Activated CD4-positive, alpha-beta T cell treated with anti-CD3 and anti-CD28 coated beads, Interleukin-2, amount 10 ng/mL, durations not matched to agents 24 days and 14 days (primary cell): ENCODE measurements at regions of chr17 and their contacts with region 1.

Region 1: GRCh38 chr17:29709861-29710519 is 87.3 kb upstream of the CORO6 start:
- DNase-seq: no peak
- H3K4me3 Mint-ChIP-seq: no peak overlapping the region
- H3K27ac Mint-ChIP-seq: no peak overlapping the region
- H3K4me1 Mint-ChIP-seq: peaks cover 35% of the 10 kb centered on the region
- H3K27me3 Mint-ChIP-seq: no peaks in the 10 kb centered on the region

Region 2: DNA sequence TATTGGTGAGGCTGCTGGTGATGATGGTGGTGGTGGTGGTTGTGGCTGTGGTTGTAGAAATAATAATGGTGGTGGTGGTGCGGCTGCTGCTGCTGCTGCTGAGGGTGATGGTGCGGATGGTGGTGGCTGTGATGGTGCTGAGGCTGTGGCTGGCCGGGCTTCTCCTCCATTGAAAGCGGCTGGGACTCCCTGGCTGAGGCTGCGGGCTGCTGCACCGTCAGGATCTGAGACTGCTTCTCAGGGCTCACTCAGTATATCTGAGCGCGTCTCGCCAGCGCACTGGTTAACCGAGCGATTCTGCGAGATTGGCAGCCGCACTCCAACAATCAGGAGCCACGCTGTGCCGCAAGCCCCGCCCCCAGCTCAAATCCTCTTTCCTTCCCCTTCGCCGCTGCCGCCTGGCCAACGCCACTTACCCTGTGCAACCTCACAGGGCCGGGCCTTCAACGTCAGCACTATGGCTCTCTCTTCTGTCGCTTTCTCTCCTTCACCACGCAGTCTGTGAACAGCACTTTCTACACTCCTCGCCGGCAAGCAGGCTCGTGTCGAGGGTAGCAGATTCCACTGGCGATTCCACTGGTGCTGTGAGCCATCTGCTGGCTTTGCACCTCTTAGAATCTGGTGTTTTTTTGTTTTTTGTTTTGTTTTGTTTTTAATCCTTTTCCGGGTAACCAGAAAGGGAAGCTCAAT is 416.0 kb before region 1 on chr17 and contains the start of gene NUFIP2:
- intact Hi-C with region 1: loop called (anchors 10 kb)
- DNase-seq: peak; percentile 99
- H3K4me3 Mint-ChIP-seq: peak within 1 kb of the TSS; percentile 99
- H3K27ac Mint-ChIP-seq: peak within 1 kb of the TSS; percentile 99
- H3K4me1 Mint-ChIP-seq: peaks cover 28% of the 10 kb centered on the region
- H3K27me3 Mint-ChIP-seq: no peaks in the 10 kb centered on the region
- total RNA-seq, gene NUFIP2: 83.2 and 89.7 TPM in 2 replicates

Region 3: DNA sequence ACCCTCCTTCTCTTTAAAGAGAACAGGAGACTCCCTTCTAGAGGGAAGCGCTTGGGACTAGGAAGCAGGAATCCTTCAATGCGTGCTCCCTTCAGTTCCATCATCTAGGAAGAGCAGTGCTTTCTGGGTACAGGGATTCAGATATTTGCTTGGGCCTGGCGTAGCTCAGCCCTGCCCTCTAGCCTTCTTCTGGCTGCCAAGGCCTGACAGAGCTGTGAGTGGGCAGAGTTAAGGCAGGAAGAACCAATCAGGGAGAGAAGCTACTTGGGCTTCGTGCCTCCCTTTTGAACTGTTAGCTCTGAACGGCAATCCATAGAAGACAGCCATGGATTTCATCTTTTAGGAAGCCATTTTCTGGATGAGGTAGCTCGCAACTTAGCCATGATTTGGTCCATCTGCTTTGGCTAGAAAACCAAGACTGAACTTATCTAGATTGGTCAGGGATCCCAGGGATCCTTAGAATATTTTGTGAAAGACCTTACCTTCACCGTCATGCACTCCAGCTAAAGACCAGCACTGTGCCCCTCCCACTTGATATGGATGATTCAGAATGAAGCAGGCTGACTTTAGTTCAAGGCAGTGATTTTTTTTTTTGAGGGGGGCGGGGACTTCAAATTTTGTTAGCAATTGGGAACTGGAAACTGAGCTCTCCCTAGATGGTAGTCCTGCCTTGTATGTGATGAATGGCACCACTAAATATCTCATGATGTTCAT is 84.8 kb before region 1 on chr17:
- intact Hi-C with region 1: loop called (anchors 2 kb)
- DNase-seq: no peak
- H3K4me3 Mint-ChIP-seq: no peak overlapping the region
- H3K27ac Mint-ChIP-seq: peak overlapping the region; percentile 85
- H3K4me1 Mint-ChIP-seq: peaks cover 57% of the 10 kb centered on the region
- H3K27me3 Mint-ChIP-seq: no peaks in the 10 kb centered on the region

Region 4: DNA sequence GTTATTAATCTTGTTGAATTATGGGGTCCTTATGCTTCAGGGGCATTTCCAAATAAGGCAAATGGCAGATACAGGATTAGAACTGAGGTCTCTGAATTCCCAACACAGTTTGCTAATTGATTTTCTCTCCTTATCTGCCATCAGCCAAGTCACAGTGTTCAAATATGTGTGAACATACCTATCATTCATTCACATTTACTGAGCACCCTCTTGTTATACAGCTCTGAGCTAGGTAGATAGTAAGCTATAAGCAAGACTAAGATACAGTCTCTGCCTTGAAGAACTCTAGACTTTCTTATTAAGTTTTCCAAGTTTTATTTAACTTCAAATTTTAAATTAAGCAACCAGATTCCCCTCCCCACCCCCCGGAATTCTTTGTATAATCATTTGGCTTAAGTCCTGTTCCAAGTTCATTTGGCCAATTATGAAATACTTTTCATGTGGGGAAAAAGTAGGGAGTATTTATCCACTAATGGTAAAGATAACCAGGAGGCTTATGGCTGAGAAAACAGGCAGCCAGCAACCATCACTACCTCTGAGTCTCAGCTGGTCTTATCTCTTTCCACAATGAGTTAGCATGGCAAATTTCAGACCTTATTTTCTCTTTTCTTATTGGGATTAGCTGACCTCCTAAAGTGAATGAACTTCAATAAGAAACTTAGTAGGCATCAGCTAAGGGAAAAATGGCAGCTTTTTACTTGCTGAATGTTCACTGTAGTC is 55.8 kb before region 1 on chr17:
- intact Hi-C with region 1: no loop called
- DNase-seq: no peak
- H3K4me3 Mint-ChIP-seq: no peak overlapping the region
- H3K27ac Mint-ChIP-seq: no peak overlapping the region
- H3K4me1 Mint-ChIP-seq: peaks cover 2% of the 10 kb centered on the region
- H3K27me3 Mint-ChIP-seq: no peaks in the 10 kb centered on the region

Region 5: GRCh38 chr17:29664743-29665480 is 45.1 kb before region 1 on chr17:
- intact Hi-C with region 1: loop called (anchors 2 kb)
- DNase-seq: no peak
- H3K4me3 Mint-ChIP-seq: peak overlapping the region; percentile 15
- H3K27ac Mint-ChIP-seq: peak overlapping the region; percentile 77
- H3K4me1 Mint-ChIP-seq: peaks cover 25% of the 10 kb centered on the region
- H3K27me3 Mint-ChIP-seq: no peaks in the 10 kb centered on the region

Region 6: GRCh38 chr17:29687596-29687995 is 22.4 kb before region 1 on chr17:
- intact Hi-C with region 1: loop called (anchors 1 kb)
- DNase-seq: no peak
- H3K4me3 Mint-ChIP-seq: no peak overlapping the region
- H3K27ac Mint-ChIP-seq: no peak overlapping the region
- H3K4me1 Mint-ChIP-seq: peaks cover 10% of the 10 kb centered on the region
- H3K27me3 Mint-ChIP-seq: no peaks in the 10 kb centered on the region

Region 7: GRCh38 chr17:29722411-29723198 is 12.6 kb after region 1 on chr17:
- intact Hi-C with region 1: loop called (anchors 2 kb)
- DNase-seq: peak; percentile 79
- H3K4me3 Mint-ChIP-seq: peak overlapping the region; percentile 56
- H3K27ac Mint-ChIP-seq: peak overlapping the region; percentile 74
- H3K4me1 Mint-ChIP-seq: peaks cover 51% of the 10 kb centered on the region
- H3K27me3 Mint-ChIP-seq: no peaks in the 10 kb centered on the region

Region 8: GRCh38 chr17:29760761-29761696 is 51.0 kb after region 1 on chr17:
- intact Hi-C with region 1: loop called (anchors 1 kb)
- DNase-seq: peak; percentile 98
- H3K4me3 Mint-ChIP-seq: peak overlapping the region; percentile 98
- H3K27ac Mint-ChIP-seq: peak overlapping the region; percentile 97
- H3K4me1 Mint-ChIP-seq: peaks cover 35% of the 10 kb centered on the region
- H3K27me3 Mint-ChIP-seq: no peaks in the 10 kb centered on the region